ENCODE measurements at regions of chr18 and their contacts with region 1.

Region 1: DNA sequence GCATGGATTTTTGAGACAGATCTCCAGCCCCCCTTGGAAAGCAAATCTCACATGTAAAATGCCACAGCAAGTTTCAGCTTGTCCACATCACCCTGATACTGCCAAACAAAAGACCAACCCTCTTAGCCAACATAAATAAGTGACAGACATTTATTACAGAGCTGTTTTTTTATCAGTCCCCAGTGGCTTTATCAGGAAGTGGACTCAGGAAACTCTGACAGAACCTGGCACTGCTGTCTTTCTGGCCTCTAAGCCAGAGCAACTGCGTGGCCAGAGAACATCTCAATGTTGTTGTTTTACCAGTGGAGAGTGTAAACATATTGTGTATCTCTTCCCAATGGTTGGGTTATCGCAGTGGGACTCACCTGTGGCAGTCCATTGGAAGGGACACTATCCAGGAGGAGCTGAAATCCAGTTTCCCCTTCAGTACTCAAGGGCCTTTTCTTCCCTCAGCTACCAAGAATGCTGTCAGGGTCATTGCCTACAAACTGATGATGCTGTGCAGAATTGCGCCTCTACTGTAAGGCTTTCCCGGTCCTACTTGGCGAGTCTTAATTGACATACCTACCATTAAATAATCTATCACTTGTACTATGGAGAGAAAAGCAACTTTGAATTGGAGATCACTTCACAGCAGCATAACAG is 22.0 kb downstream of the SLC14A1 start:
- DNase-seq: no peak
- ATAC-seq: peak; percentile 61
- H3K4me3 ChIP-seq: no peak overlapping the region
- H3K27ac ChIP-seq: peak overlapping the region; percentile 9 to 94
- H3K4me1 ChIP-seq: peaks cover 0 to 5% of the 10 kb centered on the region in 2 donors
- H3K27me3 ChIP-seq: no peaks in the 10 kb centered on the region

Region 2: GRCh38 chr18:45802608-45803492 is 56.9 kb after region 1 on chr18:
- intact Hi-C with region 1: loop called in 1 of 2 experiments (anchors 5 kb)
- DNase-seq: no peak
- ATAC-seq: peak; percentile 63
- H3K4me3 ChIP-seq: no peak overlapping the region
- H3K27ac ChIP-seq: peak overlapping the region in 1 of 2 donors; percentile 71
- H3K4me1 ChIP-seq: peaks cover 0 to 6% of the 10 kb centered on the region in 2 donors
- H3K27me3 ChIP-seq: no peaks in the 10 kb centered on the region